ENCODE measurements at regions of chr2 and their contacts with region 1.

Region 1: GRCh38 chr2:169983506-169983905 is 156.3 kb downstream of the UBR3 start:
- DNase-seq: peak in 3 of 10 donors; percentile 35 to 54 (median 41)

Region 2: GRCh38 chr2:169438460-169439072 is 544.9 kb before region 1 on chr2:
- intact Hi-C with region 1: no loop called
- DNase-seq: no peak

Region 3: GRCh38 chr2:169933124-169933711 is 50.3 kb before region 1 on chr2:
- intact Hi-C with region 1: loop called (anchors 1 kb)
- DNase-seq: no peak